ENCODE measurements at regions of chr5 and their contacts with region 1.

Region 1: DNA sequence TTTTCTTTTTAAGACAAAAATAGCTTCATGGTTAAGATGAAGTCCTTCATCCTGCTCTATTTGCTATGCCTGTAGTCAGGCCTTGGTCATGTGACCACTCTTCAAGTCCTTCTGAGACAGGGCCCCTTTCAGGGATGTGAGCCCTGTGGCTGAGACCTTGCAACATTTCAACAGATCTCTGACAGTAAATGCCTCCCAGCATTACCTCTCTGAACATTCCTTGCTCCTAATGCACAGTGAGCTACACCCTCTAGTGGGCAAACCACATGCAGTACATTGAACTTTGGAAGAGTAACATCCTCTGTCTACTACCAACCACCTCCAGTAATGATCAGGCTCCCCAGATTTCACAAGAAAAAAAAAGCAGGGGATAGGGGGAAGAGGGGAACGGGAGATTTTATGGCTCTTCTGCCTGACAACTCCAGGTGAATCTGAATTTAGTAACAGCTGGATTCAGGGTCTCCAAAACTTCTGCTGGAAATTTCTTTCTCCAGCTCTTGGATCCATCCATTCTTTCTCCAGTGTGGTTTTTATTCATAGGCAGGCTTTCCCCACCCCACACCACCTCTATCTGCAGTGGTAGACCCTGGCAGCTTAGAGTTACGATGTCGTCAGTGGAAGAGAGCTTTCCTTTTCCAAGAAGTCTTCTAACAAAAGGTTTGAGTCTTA is 8.9 kb upstream of the FBXO38 start:
- DNase-seq: peak; percentile 36
- ATAC-seq: peak; percentile 99
- H3K4me3 Mint-ChIP-seq: no peak overlapping the region
- H3K27ac Mint-ChIP-seq: no peak overlapping the region
- H3K4me1 Mint-ChIP-seq: peaks cover 4% of the 10 kb centered on the region
- H3K27me3 Mint-ChIP-seq: no peaks in the 10 kb centered on the region
- CTCF ChIP-seq: peak; percentile 33

Region 2: DNA sequence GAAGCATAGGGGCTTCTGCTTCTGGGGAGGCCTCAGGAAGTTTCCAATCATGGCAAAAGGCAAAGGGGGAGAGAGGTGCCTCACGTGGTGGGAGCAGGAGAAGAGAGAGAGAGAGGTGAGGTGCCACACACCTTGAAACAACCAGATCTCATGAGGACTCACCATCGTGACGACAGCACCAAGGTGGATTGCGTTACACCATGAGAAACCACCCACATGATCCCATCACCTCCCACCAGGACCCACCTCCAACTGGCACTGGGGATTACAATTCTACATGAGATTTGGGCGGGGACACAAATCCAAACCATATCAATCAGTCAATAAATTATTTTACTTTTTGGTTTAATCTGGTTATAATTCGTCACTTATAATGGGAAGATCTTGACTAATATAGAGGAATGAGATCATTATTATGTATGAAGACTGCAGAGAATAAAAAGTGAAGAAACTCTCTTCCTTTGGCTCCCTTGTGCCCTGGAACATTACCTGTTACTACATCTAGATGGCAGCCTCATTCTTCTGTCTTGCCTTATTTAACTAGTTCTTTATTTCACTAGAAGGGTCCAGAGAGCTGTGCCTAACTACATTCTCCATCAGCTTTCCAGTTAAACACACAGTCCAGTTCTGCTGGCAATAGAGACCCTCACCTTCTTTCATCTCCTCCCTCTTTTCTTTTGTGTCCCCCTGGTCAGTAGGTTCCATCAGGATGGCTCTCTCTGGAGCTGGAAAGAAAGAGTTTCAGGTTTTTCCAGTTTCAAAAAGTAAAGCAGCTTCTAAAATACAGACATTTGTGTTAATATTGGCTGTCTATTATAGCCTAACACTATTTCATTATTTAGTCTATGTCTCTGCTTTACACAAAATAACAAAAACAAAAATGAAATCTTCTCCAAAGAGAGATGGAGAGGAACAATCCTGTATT is 84.3 kb before region 1 on chr5:
- CTCF ChIA-PET with region 1: interaction called, 18 read pairs
- POLR2A ChIA-PET with region 1: no interaction called
- DNase-seq: peak; percentile 14
- ATAC-seq: peak; percentile 95
- H3K4me3 Mint-ChIP-seq: peak overlapping the region; percentile 2; the same call in 1 of the 2 replicates
- H3K27ac Mint-ChIP-seq: no peak overlapping the region
- H3K4me1 Mint-ChIP-seq: peaks cover 5% of the 10 kb centered on the region
- H3K27me3 Mint-ChIP-seq: no peaks in the 10 kb centered on the region; the same call in 1 of the 2 replicates
- CTCF ChIP-seq: no peak

Region 3: DNA sequence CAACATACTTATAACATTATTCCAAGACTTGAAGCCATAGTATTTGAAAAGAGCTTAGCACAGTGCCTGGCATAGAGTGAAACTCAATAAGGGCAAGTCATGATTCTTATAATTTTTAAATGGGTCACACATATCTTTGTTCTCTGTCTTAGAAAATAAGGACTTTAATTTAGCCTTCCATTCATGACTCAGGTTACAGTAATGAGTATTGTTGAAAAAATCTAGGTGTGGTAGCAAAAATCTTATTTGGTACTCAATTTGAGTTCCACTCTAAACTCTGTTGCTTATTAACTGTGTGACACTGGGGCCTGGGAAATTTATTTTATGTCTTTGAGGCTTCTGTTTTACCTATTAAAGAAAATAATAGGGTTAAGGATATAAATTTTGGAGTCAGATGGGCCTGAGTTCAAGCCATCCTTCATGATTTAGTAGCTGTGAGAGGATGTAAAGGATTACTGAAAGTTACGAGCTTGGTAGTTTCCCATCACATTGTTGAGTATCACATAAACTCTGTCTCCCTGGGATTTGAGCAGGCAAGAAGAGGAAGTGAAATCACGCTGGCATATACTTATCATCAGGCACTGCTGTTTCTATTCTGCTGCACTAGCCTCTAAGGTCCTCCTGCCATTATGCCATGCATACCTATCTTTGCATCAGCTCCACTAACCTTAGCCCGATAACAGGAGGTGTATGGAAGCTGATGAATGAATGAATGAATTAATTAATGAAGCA is 38.0 kb before region 1 on chr5:
- CTCF ChIA-PET with region 1: no interaction called
- POLR2A ChIA-PET with region 1: no interaction called
- DNase-seq: no peak
- ATAC-seq: no peak
- H3K4me3 Mint-ChIP-seq: no peak overlapping the region
- H3K27ac Mint-ChIP-seq: no peak overlapping the region
- H3K4me1 Mint-ChIP-seq: no peaks in the 10 kb centered on the region
- H3K27me3 Mint-ChIP-seq: no peaks in the 10 kb centered on the region
- CTCF ChIP-seq: no peak

Region 4: GRCh38 chr5:148397968-148398597 is 23.3 kb after region 1 on chr5:
- CTCF ChIA-PET with region 1: interaction called, 13 read pairs
- POLR2A ChIA-PET with region 1: no interaction called
- DNase-seq: peak; percentile 61
- ATAC-seq: peak; percentile 99
- H3K4me3 Mint-ChIP-seq: peak overlapping the region; percentile 24
- H3K27ac Mint-ChIP-seq: peak overlapping the region; percentile 77
- H3K4me1 Mint-ChIP-seq: peaks cover 41% of the 10 kb centered on the region
- H3K27me3 Mint-ChIP-seq: no peaks in the 10 kb centered on the region
- CTCF ChIP-seq: no peak